Mammary epithelial cell (primary cell): ENCODE measurements at regions of chr14 and their contacts with region 1.

Region 1: GRCh38 chr14:49892636-49893308 is at the start of gene ARF6:
- DNase-seq: peak; percentile 97
- H3K4me3 ChIP-seq: peak within 1 kb of the TSS; percentile 87 to 100 (median 96)
- H3K27ac ChIP-seq: peak within 1 kb of the TSS; percentile 94
- H3K4me1 ChIP-seq: peaks cover 11% of the 10 kb centered on the region
- H3K27me3 ChIP-seq: no peaks in the 10 kb centered on the region
- CTCF ChIP-seq: peak in 1 of 2 donors; percentile 39
- total RNA-seq, gene ARF6: 85.5 to 132 TPM

Region 2: GRCh38 chr14:49946320-49947141 is 53.8 kb after region 1 on chr14:
- CTCF ChIA-PET with region 1: no interaction called
- dilution Hi-C with region 1: no loop called
- in situ Hi-C with region 1: loop called in 1 of 2 experiments (anchors 10 kb)
- intact Hi-C with region 1: loop called (anchors 2 kb)
- DNase-seq: peak; percentile 72
- H3K4me3 ChIP-seq: no peak overlapping the region
- H3K27ac ChIP-seq: no peak overlapping the region
- H3K4me1 ChIP-seq: peaks cover 30% of the 10 kb centered on the region
- H3K27me3 ChIP-seq: no peaks in the 10 kb centered on the region
- CTCF ChIP-seq: no peak

Region 3: GRCh38 chr14:50008562-50009350 is 116.0 kb after region 1 on chr14:
- CTCF ChIA-PET with region 1: no interaction called
- dilution Hi-C with region 1: no loop called
- in situ Hi-C with region 1: loop called (anchors 5 to 10 kb)
- intact Hi-C with region 1: loop called (anchors 2 kb)
- DNase-seq: peak; percentile 94
- H3K4me3 ChIP-seq: no peak overlapping the region
- H3K27ac ChIP-seq: peak overlapping the region; percentile 96
- H3K4me1 ChIP-seq: peaks cover 55% of the 10 kb centered on the region
- H3K27me3 ChIP-seq: no peaks in the 10 kb centered on the region
- CTCF ChIP-seq: no peak

Region 4: DNA sequence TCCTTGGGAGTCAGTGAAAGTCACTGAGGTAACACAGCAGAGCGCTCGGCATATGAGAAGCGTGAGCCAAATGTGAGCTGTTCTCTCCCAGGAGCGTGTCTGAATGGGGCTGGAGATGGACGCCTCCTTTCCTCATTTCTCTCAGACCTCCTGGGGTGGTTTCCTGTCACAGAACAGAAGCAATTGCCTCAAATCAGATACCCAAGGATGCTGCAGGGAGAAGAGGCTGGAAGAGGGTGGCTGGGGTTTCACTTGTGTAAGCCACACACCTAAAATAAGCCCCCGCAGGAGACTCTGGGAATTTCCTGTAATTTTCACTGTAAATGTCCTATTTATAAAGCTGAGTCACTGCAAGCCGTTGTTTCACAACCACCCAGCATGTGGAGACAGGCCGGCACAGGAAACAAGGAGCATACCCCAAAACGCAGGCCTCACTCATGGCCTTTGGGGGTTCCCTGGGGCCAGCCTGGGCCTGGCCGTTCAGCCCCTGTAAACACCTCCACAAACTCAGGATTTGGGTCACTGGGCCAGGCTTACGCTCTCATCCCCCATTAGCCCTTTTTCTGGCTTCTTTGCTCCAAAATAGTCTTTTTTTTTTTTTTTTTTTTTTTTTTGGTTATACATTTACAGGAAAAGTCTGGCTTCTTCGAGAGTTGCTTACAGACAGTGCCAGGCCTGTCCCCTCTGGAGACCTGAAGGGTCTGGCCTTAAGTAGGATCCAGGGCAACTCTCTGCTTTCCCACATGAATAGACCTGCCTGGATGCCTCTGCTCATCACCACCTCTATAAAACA is 168.3 kb after region 1 on chr14:
- CTCF ChIA-PET with region 1: interaction called, 3 read pairs
- dilution Hi-C with region 1: no loop called
- in situ Hi-C with region 1: no loop called
- intact Hi-C with region 1: loop called (anchors 1 kb)
- DNase-seq: peak; percentile 99
- H3K4me3 ChIP-seq: no peak overlapping the region
- H3K27ac ChIP-seq: peak overlapping the region; percentile 84
- H3K4me1 ChIP-seq: peaks cover 34% of the 10 kb centered on the region
- H3K27me3 ChIP-seq: no peaks in the 10 kb centered on the region
- CTCF ChIP-seq: peak in 1 of 2 donors; percentile 20

Region 5: GRCh38 chr14:50109342-50109741 is 216.6 kb after region 1 on chr14:
- CTCF ChIA-PET with region 1: no interaction called
- dilution Hi-C with region 1: no loop called
- in situ Hi-C with region 1: no loop called
- intact Hi-C with region 1: loop called (anchors 1 kb)
- DNase-seq: no peak
- H3K4me3 ChIP-seq: no peak overlapping the region
- H3K27ac ChIP-seq: no peak overlapping the region
- H3K4me1 ChIP-seq: peaks cover under 1% of the 10 kb centered on the region
- H3K27me3 ChIP-seq: no peaks in the 10 kb centered on the region
- CTCF ChIP-seq: peak; percentile 16 to 19